ENCODE measurements at regions of chr14 and their contacts with region 1.

Region 1: GRCh38 chr14:52131640-52132320 is 62.9 kb upstream of the NID2 start:
- DNase-seq: peak; percentile 55 to 80
- H3K4me3 ChIP-seq: no peak overlapping the region
- H3K27ac ChIP-seq: no peak overlapping the region
- H3K4me1 ChIP-seq: peaks cover 0 to 4% (median 0%) of the 10 kb centered on the region in 4 donors
- H3K27me3 ChIP-seq: no peaks in the 10 kb centered on the region
- CTCF ChIP-seq: peak; percentile 65 to 74

Region 2: GRCh38 chr14:51996148-51996746 is 135.5 kb before region 1 on chr14:
- intact Hi-C with region 1: loop called (anchors 5 kb)
- DNase-seq: no peak
- H3K4me3 ChIP-seq: no peak overlapping the region
- H3K27ac ChIP-seq: no peak overlapping the region
- H3K4me1 ChIP-seq: peaks cover 0 to 5% (median 1%) of the 10 kb centered on the region in 4 donors
- H3K27me3 ChIP-seq: no peaks in the 10 kb centered on the region
- CTCF ChIP-seq: peak; percentile 80 to 85

Region 3: GRCh38 chr14:52021957-52022600 is 109.7 kb before region 1 on chr14:
- intact Hi-C with region 1: no loop called
- DNase-seq: no peak
- H3K4me3 ChIP-seq: no peak overlapping the region
- H3K27ac ChIP-seq: no peak overlapping the region
- H3K4me1 ChIP-seq: peaks cover 0 to 32% (median 10%) of the 10 kb centered on the region in 4 donors
- H3K27me3 ChIP-seq: no peaks in the 10 kb centered on the region
- CTCF ChIP-seq: no peak

Region 4: GRCh38 chr14:52222901-52223300 is 91.1 kb after region 1 on chr14:
- intact Hi-C with region 1: no loop called
- DNase-seq: no peak
- H3K4me3 ChIP-seq: no peak overlapping the region
- H3K27ac ChIP-seq: no peak overlapping the region
- H3K4me1 ChIP-seq: no peaks in the 10 kb centered on the region
- H3K27me3 ChIP-seq: no peaks in the 10 kb centered on the region
- CTCF ChIP-seq: no peak